HEK293 (cell line): ENCODE measurements at regions of chr17 and their contacts with region 1.

Region 1: DNA sequence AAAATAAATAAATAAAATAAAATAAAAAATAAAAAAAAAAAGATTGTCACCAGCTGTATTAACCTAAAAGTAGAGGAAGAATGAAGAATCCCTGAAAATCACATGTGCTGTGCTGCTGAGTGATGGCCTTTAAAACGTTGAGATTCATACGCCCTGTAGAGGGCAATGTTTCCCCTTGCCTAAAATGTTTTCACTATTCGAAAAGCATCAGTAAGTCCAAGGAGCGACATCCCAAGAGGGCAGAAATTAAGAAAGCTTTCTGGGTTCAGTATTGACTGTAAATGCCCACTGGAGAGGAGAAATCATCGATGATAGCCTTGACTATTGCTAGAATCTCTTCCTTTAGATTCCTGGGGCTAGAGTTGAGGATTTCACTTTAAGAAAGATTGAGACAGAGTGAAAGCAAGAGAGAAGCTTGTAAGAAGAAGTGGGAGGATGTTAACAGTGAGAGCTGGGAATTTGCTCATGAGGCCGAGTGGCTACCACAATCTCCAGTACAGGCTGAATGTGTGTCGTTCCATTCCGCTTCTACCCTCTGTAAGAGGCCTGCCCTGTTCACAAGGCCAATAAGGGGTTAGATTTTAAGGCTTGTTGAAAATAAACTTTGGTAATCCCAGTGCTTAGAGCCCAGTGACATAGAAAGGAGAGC is 170.8 kb upstream of the FAM20A start:
- H3K4me3 ChIP-seq: no peak overlapping the region
- H3K27ac ChIP-seq: no peak overlapping the region
- H3K4me1 ChIP-seq: no peaks in the 10 kb centered on the region
- CTCF ChIP-seq: no peak

Region 2: GRCh38 chr17:68656666-68657065 is 115.3 kb before region 1 on chr17:
- CTCF ChIA-PET with region 1: no interaction called
- POLR2A ChIA-PET with region 1: no interaction called
- H3K4me3 ChIP-seq: no peak overlapping the region
- H3K27ac ChIP-seq: no peak overlapping the region
- H3K4me1 ChIP-seq: no peaks in the 10 kb centered on the region
- CTCF ChIP-seq: no peak

Region 3: DNA sequence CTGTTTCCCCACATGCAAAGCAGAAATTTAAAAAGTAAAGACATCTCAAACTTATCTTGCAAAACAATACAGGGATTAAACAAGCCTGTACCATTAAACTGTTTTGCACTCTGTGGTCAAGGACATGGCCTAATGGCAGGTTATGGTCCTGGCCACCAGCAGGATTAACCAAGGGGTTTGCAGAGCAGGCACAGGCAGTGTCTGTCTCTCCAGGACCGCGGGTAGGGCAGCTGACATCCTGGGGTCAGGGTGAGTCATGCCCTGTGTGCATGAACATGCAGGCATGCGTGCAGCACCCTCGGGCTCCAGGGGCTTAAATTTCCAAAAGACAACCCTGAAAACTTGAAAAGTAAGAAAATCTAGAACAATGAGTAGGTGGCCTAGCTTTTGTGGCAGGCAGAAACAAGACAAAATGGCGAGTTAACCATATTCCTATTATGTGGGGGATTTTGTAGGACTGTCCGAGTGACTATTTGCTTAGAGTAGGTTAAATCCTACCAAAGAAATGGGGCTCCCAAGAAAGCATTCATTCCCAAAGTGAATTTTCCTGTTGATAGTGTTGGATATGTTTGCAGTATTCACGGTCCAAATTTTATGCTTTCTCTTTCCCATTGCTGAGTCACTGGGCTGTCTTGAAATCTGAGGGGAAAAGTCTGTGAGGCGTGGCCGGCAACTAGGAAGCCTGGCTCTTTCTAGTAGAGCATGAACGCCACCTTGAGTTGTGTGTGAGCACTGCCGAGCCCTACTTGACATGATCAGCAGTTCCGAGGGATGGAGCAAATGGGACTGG is 12.5 kb before region 1 on chr17:
- CTCF ChIA-PET with region 1: interaction called, 10 read pairs
- POLR2A ChIA-PET with region 1: no interaction called
- H3K4me3 ChIP-seq: peak overlapping the region; percentile 45
- H3K27ac ChIP-seq: peak overlapping the region; percentile 52; the same call in 1 of the 2 replicates
- H3K4me1 ChIP-seq: peaks cover 6% of the 10 kb centered on the region
- CTCF ChIP-seq: peak; percentile 69; the same call in 1 of the 2 replicates

Region 4: GRCh38 chr17:69235338-69235930 is 463.4 kb after region 1 on chr17:
- CTCF ChIA-PET with region 1: interaction called, 58 read pairs
- POLR2A ChIA-PET with region 1: no interaction called
- H3K4me3 ChIP-seq: no peak overlapping the region
- H3K27ac ChIP-seq: no peak overlapping the region
- H3K4me1 ChIP-seq: no peaks in the 10 kb centered on the region
- CTCF ChIP-seq: peak; percentile 87

Region 5: GRCh38 chr17:69246726-69247375 is 474.9 kb after region 1 on chr17:
- CTCF ChIA-PET with region 1: interaction called, 72 read pairs
- POLR2A ChIA-PET with region 1: no interaction called
- H3K4me3 ChIP-seq: no peak overlapping the region
- H3K27ac ChIP-seq: no peak overlapping the region
- H3K4me1 ChIP-seq: no peaks in the 10 kb centered on the region
- CTCF ChIP-seq: no peak